SK-N-SH (cell line): ENCODE measurements at regions of chr21 and their contacts with region 1.

Region 1: DNA sequence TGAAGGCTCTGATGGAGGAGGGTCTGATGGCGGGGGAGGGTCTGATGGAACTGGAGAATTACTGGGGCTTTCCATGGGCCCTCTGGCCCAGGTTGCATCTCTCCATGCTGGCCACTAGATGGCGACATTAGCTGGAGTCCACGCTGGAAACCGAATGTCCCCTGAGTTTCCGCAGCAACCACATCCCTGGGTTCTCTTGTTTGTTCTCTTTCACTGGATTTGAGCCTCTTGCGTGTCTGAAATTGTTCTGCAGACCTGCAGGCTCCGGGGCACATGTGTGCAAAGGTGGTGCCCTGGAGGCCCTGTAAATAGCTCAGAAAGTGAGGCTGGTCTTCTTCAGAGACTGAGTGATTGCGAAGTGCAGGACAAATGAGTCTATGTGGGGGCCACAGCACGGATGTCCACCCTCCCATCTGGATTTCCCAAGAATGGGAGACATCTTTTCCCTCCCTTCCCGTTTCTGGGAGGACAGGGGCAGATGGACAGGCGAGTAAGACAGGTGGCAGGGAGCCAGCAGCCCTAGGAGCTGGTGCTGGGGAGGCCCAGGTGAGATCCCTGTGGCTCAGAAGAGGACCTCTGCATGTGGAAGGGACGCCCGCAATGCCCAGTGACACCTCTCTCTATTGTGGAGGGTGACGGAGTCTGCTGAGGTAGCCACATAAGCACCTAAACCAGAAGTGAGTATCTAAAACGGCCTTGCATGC is 73.2 kb upstream of the ABCG1 start:
- DNase-seq: peak; percentile 92
- H3K4me3 ChIP-seq: peak overlapping the region in 1 of 2 experiments; percentile 9; a peak in 1 of 4 replicates
- H3K27ac ChIP-seq: no peak overlapping the region
- H3K4me1 ChIP-seq: peaks cover 0 to 5% of the 10 kb centered on the region in 2 experiments; a peak in 1 of 4 replicates
- H3K27me3 ChIP-seq: no peaks in the 10 kb centered on the region
- CTCF ChIP-seq: peak; percentile 88
- EP300 ChIP-seq: no peak
- RAD21 ChIP-seq: peak; percentile 97

Region 2: DNA sequence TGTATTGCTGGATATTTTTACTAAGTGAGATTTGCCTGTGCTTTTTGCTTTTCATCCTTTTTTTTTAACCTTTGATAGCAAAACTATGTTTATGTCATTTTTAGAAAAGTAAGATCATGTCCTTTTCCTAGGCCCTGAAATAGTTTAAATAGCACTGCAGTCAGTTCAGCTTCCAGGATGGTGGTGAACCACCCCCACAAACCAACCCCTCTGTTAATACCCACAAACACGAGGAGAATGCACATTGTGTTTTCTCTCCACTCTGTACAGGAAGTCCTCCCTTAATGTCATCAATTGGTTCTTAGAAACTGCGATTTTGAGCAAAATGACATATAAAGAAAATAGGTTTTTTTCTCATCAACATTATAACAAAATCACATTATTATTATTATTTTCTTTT is 1181.0 kb before region 1 on chr21:
- CTCF ChIA-PET with region 1: no interaction called
- POLR2A ChIA-PET with region 1: no interaction called
- DNase-seq: no peak
- H3K4me3 ChIP-seq: no peak overlapping the region
- H3K27ac ChIP-seq: no peak overlapping the region
- H3K4me1 ChIP-seq: no peaks in the 10 kb centered on the region
- H3K27me3 ChIP-seq: no peaks in the 10 kb centered on the region
- CTCF ChIP-seq: no peak
- EP300 ChIP-seq: no peak
- RAD21 ChIP-seq: no peak

Region 3: DNA sequence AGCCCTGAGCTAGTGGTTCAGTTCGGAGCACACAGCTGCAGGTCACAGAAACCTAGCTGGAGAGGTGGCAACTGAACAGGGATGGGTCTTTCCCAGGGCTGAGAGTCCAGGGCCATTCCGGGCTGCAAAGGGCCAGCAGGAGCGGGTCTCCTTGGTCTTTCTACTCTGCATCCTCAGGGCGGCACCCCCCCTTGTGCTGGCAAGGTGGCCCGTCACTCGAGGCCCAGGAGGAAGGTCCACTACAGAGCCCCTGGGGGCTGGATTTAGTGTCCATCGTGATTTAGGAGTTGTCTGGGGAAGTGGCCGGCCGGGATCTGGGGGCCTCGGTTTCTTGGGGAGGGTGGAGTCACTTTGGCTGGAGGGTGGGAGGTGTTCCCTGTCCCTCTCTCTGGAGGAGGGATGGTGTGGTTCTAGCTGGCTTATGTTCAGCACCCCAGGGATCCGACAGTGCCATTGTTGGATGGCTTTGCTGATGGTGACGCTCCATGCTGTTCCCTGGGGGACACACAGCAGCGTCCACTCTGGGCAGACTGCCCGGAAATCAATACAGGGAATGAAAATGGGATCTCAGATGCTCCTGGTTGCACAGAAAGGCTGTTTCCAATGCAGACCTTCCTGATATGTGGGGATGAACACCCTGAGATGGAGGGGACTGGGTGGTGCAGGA is 10.2 kb before region 1 on chr21:
- CTCF ChIA-PET with region 1: interaction called, 13 read pairs
- POLR2A ChIA-PET with region 1: no interaction called
- DNase-seq: no peak
- H3K4me3 ChIP-seq: no peak overlapping the region
- H3K27ac ChIP-seq: no peak overlapping the region
- H3K4me1 ChIP-seq: no peaks in the 10 kb centered on the region
- H3K27me3 ChIP-seq: no peaks in the 10 kb centered on the region; the same call in 1 of the 2 replicates
- CTCF ChIP-seq: no peak
- EP300 ChIP-seq: no peak
- RAD21 ChIP-seq: no peak

Region 4: GRCh38 chr21:42164064-42164789 is 18.5 kb after region 1 on chr21:
- CTCF ChIA-PET with region 1: interaction called, 52 read pairs
- POLR2A ChIA-PET with region 1: no interaction called
- DNase-seq: peak; percentile 52
- H3K4me3 ChIP-seq: no peak overlapping the region
- H3K27ac ChIP-seq: no peak overlapping the region
- H3K4me1 ChIP-seq: no peaks in the 10 kb centered on the region; a peak in 1 of 4 replicates
- H3K27me3 ChIP-seq: no peaks in the 10 kb centered on the region
- CTCF ChIP-seq: no peak
- EP300 ChIP-seq: no peak
- RAD21 ChIP-seq: peak; percentile 61

Region 5: DNA sequence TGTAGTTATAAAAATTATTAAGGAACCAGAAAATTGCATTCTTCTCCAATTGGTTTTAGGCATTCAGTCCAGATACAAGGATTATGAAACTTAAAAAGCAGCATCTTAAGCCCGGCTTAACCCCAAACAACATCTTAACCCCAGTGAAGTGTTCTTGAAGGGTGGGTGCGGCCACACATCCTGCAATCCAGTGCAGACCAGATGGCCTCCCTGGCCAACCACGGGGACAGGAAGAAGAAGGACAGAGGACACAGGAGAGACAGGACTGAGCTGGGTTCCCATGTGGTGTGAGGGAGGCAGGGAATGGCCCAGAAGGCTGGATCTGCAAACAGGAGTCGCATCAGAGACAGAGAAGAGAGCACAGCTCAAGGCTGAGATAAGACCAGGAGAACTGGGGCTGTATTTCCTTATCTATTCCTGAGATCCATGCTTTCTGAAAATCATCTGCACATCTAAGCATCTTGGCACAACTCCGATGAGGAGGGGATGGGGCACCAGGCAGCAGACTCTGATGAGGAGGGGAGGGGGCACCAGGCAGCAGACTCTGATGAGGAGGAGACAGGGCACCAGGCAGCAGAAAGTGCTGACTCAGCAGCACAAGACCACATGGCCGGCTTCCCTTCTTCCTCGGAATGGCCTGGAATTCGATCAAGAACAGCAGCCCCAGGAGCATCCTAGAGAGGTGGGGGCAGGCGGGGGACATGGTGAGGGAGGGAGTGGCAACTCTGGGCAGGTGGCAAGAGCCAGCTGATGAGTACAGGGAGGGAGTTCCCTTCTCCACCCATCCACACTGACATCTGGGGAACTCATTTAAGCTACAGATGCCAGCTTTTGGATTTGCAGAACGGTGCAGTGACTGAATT is 99.8 kb after region 1 on chr21:
- CTCF ChIA-PET with region 1: interaction called, 14 read pairs
- POLR2A ChIA-PET with region 1: no interaction called
- DNase-seq: peak; percentile 62
- H3K4me3 ChIP-seq: no peak overlapping the region
- H3K27ac ChIP-seq: peak overlapping the region in 1 of 2 experiments; percentile 29; a peak in 1 of 4 replicates
- H3K4me1 ChIP-seq: peaks cover 0 to 18% of the 10 kb centered on the region in 2 experiments; a peak in 2 of 4 replicates
- H3K27me3 ChIP-seq: no peaks in the 10 kb centered on the region
- CTCF ChIP-seq: no peak
- EP300 ChIP-seq: no peak
- RAD21 ChIP-seq: no peak

Region 6: DNA sequence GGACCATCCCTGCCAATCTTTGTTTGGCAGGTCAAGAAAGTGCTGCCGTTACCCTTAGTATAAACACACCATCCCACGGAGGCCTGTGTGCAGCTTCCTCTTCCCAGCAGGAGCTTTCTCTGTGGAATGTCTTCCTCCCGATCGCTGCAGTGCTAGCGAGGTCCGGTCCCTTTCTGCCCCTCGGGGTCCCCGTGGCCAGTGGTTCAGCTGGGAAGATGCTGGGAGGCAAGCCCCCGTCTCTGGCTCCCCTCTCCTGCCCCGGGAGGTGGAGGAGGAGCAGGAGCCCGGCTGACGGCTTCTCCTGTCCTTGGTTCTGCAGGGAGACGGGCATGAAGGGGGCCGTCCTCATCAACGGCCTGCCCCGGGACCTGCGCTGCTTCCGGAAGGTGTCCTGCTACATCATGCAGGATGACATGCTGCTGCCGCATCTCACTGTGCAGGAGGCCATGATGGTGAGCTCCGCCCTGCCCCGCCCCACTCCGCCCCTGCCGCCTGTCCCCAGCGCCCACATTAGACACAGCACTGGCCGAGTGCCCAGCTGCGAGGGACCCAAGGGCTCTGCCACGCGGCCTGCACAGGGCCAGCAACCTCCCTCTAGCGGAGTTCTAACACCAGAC is 127.4 kb after region 1 on chr21:
- CTCF ChIA-PET with region 1: interaction called, 10 read pairs
- POLR2A ChIA-PET with region 1: no interaction called
- DNase-seq: no peak
- H3K4me3 ChIP-seq: no peak overlapping the region
- H3K27ac ChIP-seq: no peak overlapping the region
- H3K4me1 ChIP-seq: no peaks in the 10 kb centered on the region; a peak in 1 of 4 replicates
- H3K27me3 ChIP-seq: no peaks in the 10 kb centered on the region
- CTCF ChIP-seq: no peak
- EP300 ChIP-seq: no peak
- RAD21 ChIP-seq: no peak

Region 7: GRCh38 chr21:42452707-42453508 is 307.2 kb after region 1 on chr21:
- CTCF ChIA-PET with region 1: interaction called, 13 read pairs
- POLR2A ChIA-PET with region 1: no interaction called
- DNase-seq: no peak
- H3K4me3 ChIP-seq: no peak overlapping the region
- H3K27ac ChIP-seq: no peak overlapping the region
- H3K4me1 ChIP-seq: peaks cover 0 to 9% of the 10 kb centered on the region in 2 experiments; a peak in 1 of 4 replicates
- H3K27me3 ChIP-seq: no peaks in the 10 kb centered on the region
- CTCF ChIP-seq: no peak
- EP300 ChIP-seq: no peak
- RAD21 ChIP-seq: no peak